Endothelial cell of umbilical vein (primary cell): ENCODE measurements at regions of chr20 and their contacts with region 1.

Region 1: GRCh38 chr20:36399147-36399968 is 93.2 kb downstream of the DLGAP4 start:
- DNase-seq: peak; percentile 73
- H3K4me3 ChIP-seq: no peak overlapping the region
- H3K27ac ChIP-seq: no peak overlapping the region
- H3K4me1 ChIP-seq: no peaks in the 10 kb centered on the region
- H3K27me3 ChIP-seq: peaks cover 17 to 19% of the 10 kb centered on the region in 2 experiments
- CTCF ChIP-seq: peak; percentile 66 to 67
- POLR2A ChIP-seq: no peak

Region 2: GRCh38 chr20:36214684-36215256 is 184.6 kb before region 1 on chr20:
- CTCF ChIA-PET with region 1: interaction called, 29 read pairs
- POLR2A ChIA-PET with region 1: no interaction called
- dilution Hi-C with region 1: no loop called
- intact Hi-C with region 1: loop called (anchors 1 kb)
- DNase-seq: peak; percentile 19
- H3K4me3 ChIP-seq: no peak overlapping the region
- H3K27ac ChIP-seq: no peak overlapping the region
- H3K4me1 ChIP-seq: no peaks in the 10 kb centered on the region
- H3K27me3 ChIP-seq: peaks cover 0 to 2% of the 10 kb centered on the region in 2 experiments
- CTCF ChIP-seq: peak; percentile 49 to 60
- POLR2A ChIP-seq: no peak

Region 3: GRCh38 chr20:36273414-36274180 is 125.8 kb before region 1 on chr20:
- CTCF ChIA-PET with region 1: interaction called, 81 read pairs
- POLR2A ChIA-PET with region 1: no interaction called
- dilution Hi-C with region 1: no loop called
- intact Hi-C with region 1: loop called (anchors 10 kb)
- DNase-seq: peak; percentile 26
- H3K4me3 ChIP-seq: no peak overlapping the region
- H3K27ac ChIP-seq: no peak overlapping the region
- H3K4me1 ChIP-seq: no peaks in the 10 kb centered on the region
- H3K27me3 ChIP-seq: peaks cover 0 to 3% of the 10 kb centered on the region in 2 experiments
- CTCF ChIP-seq: peak; percentile 31 to 51
- POLR2A ChIP-seq: no peak

Region 4: GRCh38 chr20:38290832-38291581 is 1891.6 kb after region 1 on chr20:
- CTCF ChIA-PET with region 1: no interaction called
- POLR2A ChIA-PET with region 1: no interaction called
- dilution Hi-C with region 1: no loop called
- intact Hi-C with region 1: no loop called
- DNase-seq: peak; percentile 33
- H3K4me3 ChIP-seq: no peak overlapping the region
- H3K27ac ChIP-seq: no peak overlapping the region
- H3K4me1 ChIP-seq: no peaks in the 10 kb centered on the region
- H3K27me3 ChIP-seq: no peaks in the 10 kb centered on the region
- CTCF ChIP-seq: peak; percentile 17 to 49
- POLR2A ChIP-seq: no peak